PC-3 (cell line): ENCODE measurements at regions of chr12 and their contacts with region 1.

Region 1: DNA sequence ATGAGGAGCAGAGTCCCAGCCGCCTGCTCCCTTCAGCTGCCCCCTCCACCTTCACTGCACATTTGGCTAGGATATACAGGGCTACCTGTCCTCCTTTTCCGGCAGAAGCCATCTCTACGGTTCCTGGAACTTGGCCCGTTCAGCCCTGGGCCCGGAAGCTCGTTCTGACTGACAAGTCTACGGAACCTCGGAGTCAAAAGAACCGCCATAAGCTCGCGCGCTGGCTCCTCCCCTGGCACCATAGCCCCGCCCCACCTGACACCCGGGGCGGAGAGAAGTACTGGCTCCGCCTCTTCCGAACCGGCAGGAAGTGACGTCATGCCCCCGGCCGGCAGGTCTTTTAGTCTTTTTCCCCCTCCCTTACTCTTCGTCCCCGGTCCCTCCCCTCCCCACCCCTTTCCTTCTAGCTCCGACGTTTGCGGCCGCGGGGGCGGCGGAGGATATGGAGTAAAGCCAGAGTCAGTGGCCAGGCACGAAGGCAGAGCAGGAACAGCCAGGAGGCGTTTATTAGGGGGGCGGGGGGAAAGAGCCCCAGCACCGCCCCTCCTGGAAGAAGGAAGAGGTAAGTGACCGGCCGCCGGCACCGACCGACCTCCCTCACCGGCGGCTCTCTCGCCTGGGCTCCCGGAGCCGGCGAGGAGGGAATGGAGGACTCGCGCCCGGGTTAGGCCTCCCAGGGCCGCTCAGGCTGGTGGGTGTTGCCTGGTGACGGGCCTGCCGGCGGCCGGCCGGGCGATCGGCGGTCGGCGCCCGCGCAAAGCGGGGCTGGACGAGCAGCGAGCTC is at the starts of genes DEPDC4 and SCYL2:
- DNase-seq: peak; percentile 99
- ATAC-seq: peak; percentile 83
- H3K4me3 ChIP-seq: peak within 1 kb of the TSS; percentile 92
- H3K27ac ChIP-seq: peak within 1 kb of the TSS; percentile 68
- H3K4me1 ChIP-seq: peaks cover 17% of the 10 kb centered on the region
- H3K27me3 ChIP-seq: no peaks in the 10 kb centered on the region
- CTCF ChIP-seq: no peak
- total RNA-seq, gene DEPDC4: 0.29 and 2.0 TPM in 2 replicates
- total RNA-seq, gene SCYL2: 35.8 and 40.7 TPM in 2 replicates

Region 2: DNA sequence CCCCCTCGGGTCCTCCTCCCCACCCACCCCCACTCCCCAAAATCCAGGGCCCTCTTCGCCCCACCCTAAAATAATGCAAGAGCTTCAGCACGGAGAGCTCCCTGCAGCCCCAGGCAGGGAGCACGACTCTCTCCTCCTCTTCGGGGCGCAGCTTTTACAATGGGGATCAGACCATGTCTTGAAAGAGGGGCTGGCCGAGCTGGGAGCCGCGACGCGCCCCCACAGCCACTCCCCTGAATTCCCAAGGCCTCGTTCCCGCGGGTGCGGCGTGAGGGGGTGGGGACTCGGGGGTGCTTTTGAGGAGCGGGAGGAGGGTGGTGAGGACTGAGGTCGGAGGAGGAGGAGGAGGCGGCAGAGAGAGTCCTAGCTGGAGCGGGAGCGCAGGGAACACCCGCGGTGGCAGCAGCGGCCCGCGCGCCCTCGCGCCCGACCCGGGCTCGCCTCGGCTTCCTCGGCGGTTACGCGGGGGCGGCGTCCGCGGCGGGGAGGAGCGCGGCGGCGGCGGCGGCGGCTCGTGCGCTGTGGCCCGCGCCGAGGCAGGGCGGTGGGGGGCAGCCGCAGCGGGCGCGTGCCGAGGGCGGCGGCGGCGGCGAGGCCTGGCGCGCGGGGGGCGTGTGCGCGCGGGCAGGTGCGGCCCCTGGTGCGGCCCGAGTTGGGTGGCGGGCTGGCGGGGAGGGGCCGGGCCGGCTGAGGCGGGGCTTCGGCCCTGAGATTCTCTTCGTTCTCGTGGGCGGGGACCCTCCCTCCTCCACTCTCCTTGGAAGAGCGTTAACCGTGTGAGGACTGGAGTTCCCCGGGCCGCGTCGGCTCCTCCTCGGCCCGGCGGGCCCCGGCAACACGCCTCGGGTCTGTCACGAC is 282.5 kb before region 1 on chr12 and contains the start of gene ANKS1B:
- CTCF ChIA-PET with region 1: no interaction called
- POLR2A ChIA-PET with region 1: no interaction called
- intact Hi-C with region 1: no loop called
- DNase-seq: peak; percentile 49
- ATAC-seq: peak; percentile 82
- H3K4me3 ChIP-seq: peak within 1 kb of the TSS; percentile 73
- H3K27ac ChIP-seq: no peak within 1 kb of the TSS
- H3K4me1 ChIP-seq: 0 out of 2 replicates have a peak, but pooled peaks cover 4% of the 10 kb centered on the region
- H3K27me3 ChIP-seq: peaks cover 59% of the 10 kb centered on the region
- CTCF ChIP-seq: no peak
- total RNA-seq, gene ANKS1B: 0.07 and 0.98 TPM in 2 replicates

Region 3: DNA sequence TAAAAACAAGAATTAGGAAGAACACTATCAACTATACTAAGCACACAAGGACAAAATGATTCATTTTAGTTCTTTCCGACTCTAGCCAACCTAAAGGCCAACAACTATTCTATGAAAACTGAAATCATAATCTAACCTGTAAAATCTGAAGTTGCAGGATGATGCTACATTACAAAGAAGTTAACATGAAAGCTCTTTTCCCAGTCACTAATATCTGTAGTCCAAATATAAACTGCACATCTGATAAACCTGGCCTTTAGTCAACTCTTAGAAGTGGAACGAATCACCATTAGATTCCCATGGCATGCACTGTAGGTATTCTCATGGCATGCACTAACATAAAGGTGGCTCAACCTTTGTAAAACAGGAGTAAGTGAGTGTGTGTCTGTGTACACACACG is 166.0 kb before region 1 on chr12:
- CTCF ChIA-PET with region 1: no interaction called
- POLR2A ChIA-PET with region 1: interaction called, 27 read pairs
- intact Hi-C with region 1: no loop called
- DNase-seq: no peak
- ATAC-seq: no peak
- H3K4me3 ChIP-seq: no peak overlapping the region
- H3K27ac ChIP-seq: no peak overlapping the region
- H3K4me1 ChIP-seq: no peaks in the 10 kb centered on the region
- H3K27me3 ChIP-seq: no peaks in the 10 kb centered on the region
- CTCF ChIP-seq: no peak

Region 4: DNA sequence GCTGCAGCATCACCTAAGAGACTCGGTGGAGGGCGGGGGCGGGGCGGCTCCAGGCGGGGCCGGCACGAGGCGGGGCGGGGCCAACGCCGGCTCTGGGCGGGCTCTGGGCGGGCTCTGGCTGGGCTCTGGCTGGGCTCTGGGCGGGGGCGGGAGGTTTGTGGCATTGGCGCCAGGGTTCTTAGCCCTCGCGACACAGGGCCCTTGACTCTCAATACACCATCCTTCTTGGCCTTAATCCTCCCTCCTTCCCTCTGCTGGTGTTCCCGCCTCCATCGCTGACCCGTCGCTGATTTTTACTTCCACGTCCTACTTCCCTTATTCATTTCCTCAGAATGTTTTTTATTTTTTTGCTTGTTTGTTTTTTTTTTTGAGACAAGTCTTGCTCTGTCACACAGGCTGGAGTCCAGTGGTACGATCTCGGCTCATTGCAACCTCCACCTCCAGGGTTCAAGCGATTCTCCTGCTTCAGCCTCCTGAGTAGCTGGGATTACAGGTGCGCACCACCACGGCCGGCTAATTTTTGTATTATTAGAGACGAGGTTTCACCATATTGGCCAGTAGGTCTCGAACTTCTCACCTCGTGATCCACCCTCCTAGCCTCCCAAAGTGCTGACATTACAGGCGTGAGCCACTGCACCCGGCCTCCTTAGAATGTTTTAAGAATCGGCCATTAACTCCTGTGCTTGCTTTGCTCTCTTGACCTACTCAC is 124.0 kb before region 1 on chr12 and contains the start of gene BLTP3B:
- CTCF ChIA-PET with region 1: no interaction called
- POLR2A ChIA-PET with region 1: interaction called, 9 read pairs
- intact Hi-C with region 1: loop called (anchors 1 kb)
- DNase-seq: peak; percentile 76
- ATAC-seq: peak; percentile 78
- H3K4me3 ChIP-seq: peak within 1 kb of the TSS; percentile 98
- H3K27ac ChIP-seq: peak within 1 kb of the TSS; percentile 64
- H3K4me1 ChIP-seq: peaks cover 32% of the 10 kb centered on the region
- H3K27me3 ChIP-seq: no peaks in the 10 kb centered on the region
- CTCF ChIP-seq: no peak
- total RNA-seq, gene BLTP3B: 29.0 and 32.0 TPM in 2 replicates

Region 5: DNA sequence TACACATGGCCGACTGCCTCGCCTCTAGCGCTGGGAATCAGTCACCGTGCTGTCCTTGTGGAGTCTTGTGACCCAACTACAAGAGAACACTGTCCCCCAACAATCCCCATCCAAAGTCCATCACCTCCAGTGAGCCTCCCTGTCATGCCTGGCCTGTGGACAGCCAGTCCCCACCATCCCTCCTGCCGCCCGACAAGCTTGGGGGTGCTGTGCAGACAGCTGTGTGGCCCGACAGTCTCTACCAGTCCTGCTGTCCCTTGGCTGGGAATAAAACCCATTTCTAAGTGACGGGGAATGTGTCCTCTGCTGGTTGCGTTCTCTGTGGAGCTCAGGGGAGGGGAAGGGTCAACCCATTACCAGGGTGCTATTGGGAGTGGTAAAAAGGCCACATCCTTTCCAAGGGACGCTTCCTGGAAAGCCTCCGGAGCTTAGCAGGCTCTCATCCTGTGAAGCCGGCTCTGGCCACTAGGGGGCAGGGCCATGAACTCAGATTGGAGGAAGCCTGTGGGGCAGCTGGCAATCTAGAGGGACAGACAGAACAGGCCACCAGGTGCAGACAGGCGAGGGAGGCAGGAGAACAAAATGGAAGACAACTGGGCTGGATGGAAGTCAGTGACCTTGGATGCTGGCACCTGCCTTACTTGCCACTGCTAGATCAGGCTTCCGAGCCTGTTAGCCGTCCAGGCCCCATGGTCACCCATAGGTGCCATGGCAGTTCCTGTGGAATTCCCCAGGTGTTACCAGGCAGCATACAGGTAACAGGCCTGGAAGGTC is 112.4 kb before region 1 on chr12:
- CTCF ChIA-PET with region 1: no interaction called
- POLR2A ChIA-PET with region 1: no interaction called
- intact Hi-C with region 1: no loop called
- DNase-seq: peak; percentile 86
- ATAC-seq: peak; percentile 84
- H3K4me3 ChIP-seq: no peak overlapping the region
- H3K27ac ChIP-seq: no peak overlapping the region
- H3K4me1 ChIP-seq: no peaks in the 10 kb centered on the region
- H3K27me3 ChIP-seq: no peaks in the 10 kb centered on the region
- CTCF ChIP-seq: peak; percentile 97

Region 6: GRCh38 chr12:100200463-100201181 is 66.4 kb before region 1 on chr12 and contains the start of gene ACTR6:
- CTCF ChIA-PET with region 1: interaction called, 3 read pairs
- POLR2A ChIA-PET with region 1: no interaction called
- intact Hi-C with region 1: loop called (anchors 1 kb)
- DNase-seq: peak; percentile 99
- ATAC-seq: peak; percentile 81
- H3K4me3 ChIP-seq: peak within 1 kb of the TSS; percentile 85
- H3K27ac ChIP-seq: peak within 1 kb of the TSS; percentile 33
- H3K4me1 ChIP-seq: peaks cover 36% of the 10 kb centered on the region
- H3K27me3 ChIP-seq: no peaks in the 10 kb centered on the region
- CTCF ChIP-seq: no peak
- total RNA-seq, gene ACTR6: 18.4 and 21.2 TPM in 2 replicates

Region 7: DNA sequence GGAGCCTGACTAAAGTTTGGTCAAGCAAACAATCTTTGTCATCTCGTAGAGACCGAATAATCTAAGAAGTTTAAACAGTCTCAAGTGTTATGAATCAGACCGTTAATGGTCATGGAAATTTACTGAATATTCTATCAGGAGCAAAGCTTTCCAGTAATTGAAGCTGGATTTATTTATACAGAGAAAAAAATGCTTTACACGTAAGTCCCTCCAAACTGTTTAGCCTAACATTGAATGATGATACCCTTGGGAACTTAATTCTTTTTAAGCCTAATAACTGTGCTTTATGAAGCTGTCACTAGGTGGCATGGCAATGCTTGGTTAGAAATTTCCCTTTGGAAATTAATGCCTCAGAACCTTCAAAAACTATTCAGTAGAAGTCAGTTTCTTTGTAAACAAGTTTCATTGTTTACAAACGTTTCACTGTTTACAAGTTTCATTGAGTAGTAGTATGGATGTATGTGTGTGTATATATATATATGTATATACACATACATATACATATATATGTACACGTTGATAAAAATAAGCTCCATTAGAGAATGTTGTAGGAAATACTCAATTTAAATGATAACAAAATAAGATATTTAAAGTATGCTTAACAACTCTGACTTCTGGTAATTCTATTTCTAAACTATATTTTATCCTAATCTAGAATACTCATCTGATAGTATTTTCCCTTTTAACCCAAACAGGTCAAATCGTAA is 32.3 kb before region 1 on chr12:
- CTCF ChIA-PET with region 1: interaction called, 3 read pairs
- POLR2A ChIA-PET with region 1: no interaction called
- intact Hi-C with region 1: loop called (anchors 1 kb)
- DNase-seq: peak; percentile 81
- ATAC-seq: peak; percentile 65
- H3K4me3 ChIP-seq: peak overlapping the region; percentile 53
- H3K27ac ChIP-seq: peak overlapping the region; percentile 66
- H3K4me1 ChIP-seq: peaks cover 34% of the 10 kb centered on the region
- H3K27me3 ChIP-seq: no peaks in the 10 kb centered on the region
- CTCF ChIP-seq: peak; percentile 93

Region 8: DNA sequence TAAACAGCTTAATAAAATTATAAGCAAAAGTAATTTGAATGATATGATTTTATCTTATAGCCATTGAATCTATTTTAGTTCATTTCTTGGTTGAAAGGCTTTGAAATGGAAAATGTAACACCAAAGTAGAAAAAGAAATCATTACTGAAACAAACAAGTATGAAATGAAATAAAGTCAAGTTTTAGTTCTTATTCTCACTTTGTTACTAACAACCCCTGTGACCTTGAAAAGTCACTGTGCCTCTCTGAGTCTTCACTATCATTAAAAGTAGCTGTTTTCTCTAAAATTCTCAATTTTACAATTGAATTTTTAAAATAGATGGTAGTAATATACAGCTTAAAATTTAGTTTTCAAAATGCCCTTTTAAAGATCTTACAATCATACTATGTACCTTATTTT is 57.5 kb after region 1 on chr12:
- CTCF ChIA-PET with region 1: interaction called, 5 read pairs
- POLR2A ChIA-PET with region 1: interaction called, 10 read pairs
- intact Hi-C with region 1: no loop called
- DNase-seq: no peak
- ATAC-seq: no peak
- H3K4me3 ChIP-seq: no peak overlapping the region
- H3K27ac ChIP-seq: no peak overlapping the region
- H3K4me1 ChIP-seq: no peaks in the 10 kb centered on the region
- H3K27me3 ChIP-seq: no peaks in the 10 kb centered on the region
- CTCF ChIP-seq: no peak

Region 9: GRCh38 chr12:100489251-100489820 is 222.3 kb after region 1 on chr12:
- CTCF ChIA-PET with region 1: no interaction called
- POLR2A ChIA-PET with region 1: no interaction called
- intact Hi-C with region 1: no loop called
- DNase-seq: no peak
- ATAC-seq: no peak
- H3K4me3 ChIP-seq: no peak overlapping the region
- H3K27ac ChIP-seq: no peak overlapping the region
- H3K4me1 ChIP-seq: no peaks in the 10 kb centered on the region
- H3K27me3 ChIP-seq: peaks cover 74% of the 10 kb centered on the region
- CTCF ChIP-seq: no peak

Region 10: GRCh38 chr12:100573292-100574186 is 306.5 kb after region 1 on chr12 and contains the start of gene GAS2L3:
- CTCF ChIA-PET with region 1: no interaction called
- POLR2A ChIA-PET with region 1: no interaction called
- intact Hi-C with region 1: loop called (anchors 1 kb)
- DNase-seq: peak; percentile 93
- ATAC-seq: peak; percentile 86
- H3K4me3 ChIP-seq: peak within 1 kb of the TSS; percentile 84
- H3K27ac ChIP-seq: peak within 1 kb of the TSS; percentile 14; the same call in 1 of the 2 replicates
- H3K4me1 ChIP-seq: peaks cover 29% of the 10 kb centered on the region
- H3K27me3 ChIP-seq: no peaks in the 10 kb centered on the region
- CTCF ChIP-seq: no peak
- total RNA-seq, gene GAS2L3: 24.8 and 27.8 TPM in 2 replicates